Mammary epithelial cell (primary cell): ENCODE measurements at regions of chr4 and their contacts with region 1.

Region 1: GRCh38 chr4:3292571-3293400 is at the start of gene RGS12:
- DNase-seq: peak; percentile 90
- H3K4me3 ChIP-seq: peak within 1 kb of the TSS; percentile 73 to 97 (median 78)
- H3K27ac ChIP-seq: peak within 1 kb of the TSS; percentile 46
- H3K4me1 ChIP-seq: peaks cover 15% of the 10 kb centered on the region
- H3K27me3 ChIP-seq: no peaks in the 10 kb centered on the region
- CTCF ChIP-seq: no peak
- total RNA-seq, gene RGS12: 72.5 to 91.4 TPM

Region 2: GRCh38 chr4:3074078-3074795 is 218.5 kb before region 1 on chr4 and contains the starts of genes HTT and HTT-AS:
- CTCF ChIA-PET with region 1: no interaction called
- dilution Hi-C with region 1: no loop called
- in situ Hi-C with region 1: no loop called
- intact Hi-C with region 1: loop called (anchors 5 kb)
- DNase-seq: peak; percentile 92
- H3K4me3 ChIP-seq: peak within 1 kb of the TSS; percentile 91 to 99 (median 99)
- H3K27ac ChIP-seq: peak within 1 kb of the TSS; percentile 76
- H3K4me1 ChIP-seq: peaks cover 11% of the 10 kb centered on the region
- H3K27me3 ChIP-seq: no peaks in the 10 kb centered on the region
- CTCF ChIP-seq: no peak
- total RNA-seq, gene HTT: 44.2 to 53.3 TPM
- total RNA-seq, gene HTT-AS: not detected

Region 3: DNA sequence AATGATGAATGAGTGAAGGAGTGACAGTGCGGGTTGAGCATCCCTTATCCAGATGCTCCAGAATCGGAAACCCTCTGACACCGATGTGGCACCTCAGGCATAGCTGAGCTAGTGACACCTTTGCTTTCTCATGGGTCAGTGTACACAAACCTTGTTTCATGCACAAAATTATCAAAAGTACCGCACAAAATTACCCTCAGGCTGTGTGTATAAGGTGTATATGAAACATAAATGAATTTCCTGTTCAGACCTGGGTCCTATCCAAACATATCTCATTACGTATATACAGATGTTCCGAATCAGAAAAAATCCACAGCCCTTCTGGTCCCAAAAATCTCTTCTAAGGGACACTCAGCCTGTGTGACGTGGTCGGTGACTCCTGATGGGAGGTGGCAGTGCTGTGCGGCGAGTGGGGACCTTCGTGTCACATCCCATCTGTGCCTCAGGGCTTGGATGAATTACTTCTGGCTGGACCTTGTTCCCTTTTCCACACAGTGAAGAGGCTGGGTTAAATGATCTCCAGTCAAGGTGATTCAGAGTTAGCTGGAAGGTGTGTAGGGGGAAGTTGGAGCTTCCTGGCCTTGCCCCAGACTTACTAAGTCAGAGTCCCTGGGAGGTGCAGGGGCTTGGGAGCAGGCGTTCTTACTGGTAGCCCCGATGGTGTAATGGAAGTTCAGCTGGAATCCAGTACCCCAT is 18.9 kb after region 1 on chr4:
- CTCF ChIA-PET with region 1: no interaction called
- dilution Hi-C with region 1: no loop called
- in situ Hi-C with region 1: no loop called
- intact Hi-C with region 1: loop called (anchors 2 kb)
- DNase-seq: peak; percentile 66
- H3K4me3 ChIP-seq: no peak overlapping the region
- H3K27ac ChIP-seq: no peak overlapping the region
- H3K4me1 ChIP-seq: peaks cover 17% of the 10 kb centered on the region
- H3K27me3 ChIP-seq: no peaks in the 10 kb centered on the region
- CTCF ChIP-seq: no peak